GM12878 (cell line): ENCODE measurements at regions of chr7 and their contacts with region 1.

Region 1: DNA sequence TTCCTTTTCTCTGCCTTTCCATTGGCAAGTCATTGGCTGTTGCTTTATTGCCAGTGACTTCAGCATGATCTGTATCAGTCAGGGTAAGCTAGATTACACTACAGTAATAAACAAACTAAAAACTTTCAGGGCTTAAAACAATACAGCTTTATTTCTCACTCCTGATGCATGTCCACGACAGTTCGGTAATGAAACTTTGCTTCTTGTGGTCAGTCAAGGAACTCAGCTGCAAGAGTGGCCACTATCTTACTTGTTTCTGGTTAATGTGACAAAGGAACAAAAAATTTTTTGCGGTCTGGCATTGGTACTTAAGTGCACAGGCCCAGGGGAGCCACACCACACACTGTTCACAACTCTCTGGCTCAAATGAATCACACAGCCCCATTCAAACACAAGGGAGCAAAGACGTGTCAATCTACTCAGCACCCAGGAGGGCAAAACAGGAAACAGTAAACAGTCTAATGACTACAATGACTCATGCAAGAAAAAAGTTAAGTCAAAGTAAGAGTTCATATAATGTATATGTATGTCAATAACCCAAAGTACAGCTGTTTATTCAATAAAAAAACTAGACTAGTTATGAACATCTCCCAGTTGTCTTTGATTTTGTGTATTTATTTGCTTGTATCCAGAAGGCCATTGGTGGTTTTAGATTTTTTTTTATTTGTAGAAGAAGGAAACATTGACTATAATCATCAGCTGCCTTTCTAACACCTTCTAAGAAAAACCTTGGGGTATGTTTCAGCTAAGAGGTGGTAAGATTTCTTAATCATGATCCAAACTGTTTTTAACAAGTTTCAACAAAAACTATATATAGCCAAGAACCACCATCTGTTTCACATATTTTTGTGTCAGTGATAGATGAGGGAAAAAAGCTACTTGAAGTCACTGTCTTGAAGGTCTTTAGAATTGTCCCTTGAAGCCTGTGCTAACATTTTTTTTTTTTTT is 134.4 kb upstream of the FAM3C start:
- DNase-seq: peak; percentile 99
- ATAC-seq: peak; percentile 98
- H3K4me3 ChIP-seq: no peak overlapping the region
- H3K27ac ChIP-seq: peak overlapping the region; percentile 80
- H3K4me1 ChIP-seq: peaks cover 17% of the 10 kb centered on the region; the same call in 1 of the 2 replicates
- H3K27me3 ChIP-seq: no peaks in the 10 kb centered on the region
- CTCF ChIP-seq: no peak
- EP300 ChIP-seq: peak; percentile 99 to 100
- POLR2A ChIP-seq: no peak
- RAD21 ChIP-seq: no peak

Region 2: DNA sequence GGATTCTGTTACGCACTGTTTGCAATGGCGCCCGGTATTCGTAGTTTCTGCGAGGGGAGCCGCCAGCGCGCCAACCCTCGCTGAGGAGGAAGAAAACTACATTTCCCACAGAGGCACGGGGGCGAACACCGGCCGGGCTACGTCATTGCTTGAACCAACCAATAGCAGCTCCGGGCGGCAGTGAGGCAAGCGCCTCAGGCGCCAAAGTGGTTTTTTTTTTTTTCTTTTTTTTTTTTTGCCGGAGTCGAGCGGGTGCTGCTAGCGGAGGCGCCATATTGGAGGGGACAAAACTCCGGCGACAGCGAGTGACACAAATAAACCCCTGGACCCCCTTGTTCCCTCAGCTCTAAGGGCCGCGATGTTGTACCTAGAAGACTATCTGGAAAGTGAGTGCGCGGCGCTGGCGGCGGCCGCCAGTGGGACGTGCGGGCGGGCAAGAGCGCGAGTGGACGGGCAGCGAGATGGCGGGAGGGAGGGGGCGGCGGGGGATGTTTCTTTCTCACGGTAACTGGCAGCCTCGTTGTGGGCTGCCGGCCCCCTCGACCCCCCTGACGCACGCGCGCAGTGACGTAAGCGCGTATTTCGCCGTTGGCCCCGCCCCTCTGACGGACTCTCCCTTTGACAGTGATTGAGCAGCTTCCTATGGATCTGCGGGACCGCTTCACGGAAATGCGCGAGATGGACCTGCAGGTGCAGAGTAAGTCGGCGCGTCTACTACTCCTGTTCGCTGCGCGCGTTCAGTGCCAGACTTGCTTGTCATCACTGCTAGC is 579.8 kb before region 1 on chr7 and contains the start of gene ING3:
- CTCF ChIA-PET with region 1: no interaction called
- POLR2A ChIA-PET with region 1: no interaction called
- RAD21 ChIA-PET with region 1: no interaction called
- SMC1A ChIA-PET with region 1: no interaction called
- in situ Hi-C with region 1: loop called (anchors 25 kb)
- intact Hi-C with region 1: loop called (anchors 10 kb)
- DNase-seq: peak; percentile 92
- ATAC-seq: peak; percentile 93
- H3K4me3 ChIP-seq: peak within 1 kb of the TSS; percentile 90
- H3K27ac ChIP-seq: peak within 1 kb of the TSS; percentile 97
- H3K4me1 ChIP-seq: 0 out of 2 replicates have a peak, but pooled peaks cover 5% of the 10 kb centered on the region
- H3K27me3 ChIP-seq: no peaks in the 10 kb centered on the region
- CTCF ChIP-seq: no peak
- EP300 ChIP-seq: 0 out of 4 replicates have a peak, but pooled peaks of 1 of the 2 experiments have one; percentile 15
- POLR2A ChIP-seq: peak; percentile 89
- RAD21 ChIP-seq: no peak
- polyA plus RNA-seq, gene ING3: 44.3 to 60.8 TPM

Region 3: DNA sequence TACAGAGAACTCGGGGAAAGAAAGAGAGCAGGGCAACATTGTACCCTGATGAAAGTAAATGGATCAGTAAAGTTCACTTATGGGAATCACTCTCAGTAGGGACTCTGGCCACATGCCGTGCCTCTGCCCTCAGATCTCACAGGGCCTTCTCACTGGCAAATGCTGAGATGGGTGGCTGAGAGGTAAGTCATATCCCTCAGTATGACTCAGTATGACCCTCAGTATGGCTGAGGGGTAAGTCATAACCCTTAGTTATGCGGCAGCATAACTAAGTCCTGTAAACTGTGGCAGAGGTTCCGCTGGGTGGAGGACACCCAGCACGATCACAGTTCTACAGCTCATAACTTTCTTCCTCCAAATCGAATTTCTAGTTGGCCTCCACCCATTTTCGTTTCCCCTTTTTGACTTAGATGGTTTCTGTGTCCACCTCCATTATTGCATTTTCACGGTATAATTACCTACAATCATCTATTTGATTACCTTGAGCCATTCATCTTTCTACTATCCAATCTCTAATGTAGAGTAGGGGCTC is 228.2 kb before region 1 on chr7:
- CTCF ChIA-PET with region 1: no interaction called
- POLR2A ChIA-PET with region 1: no interaction called
- RAD21 ChIA-PET with region 1: no interaction called
- SMC1A ChIA-PET with region 1: no interaction called
- in situ Hi-C with region 1: no loop called
- intact Hi-C with region 1: loop called (anchors 10 kb)
- DNase-seq: no peak
- ATAC-seq: peak; percentile 97
- H3K4me3 ChIP-seq: no peak overlapping the region
- H3K27ac ChIP-seq: no peak overlapping the region
- H3K4me1 ChIP-seq: peaks cover 29% of the 10 kb centered on the region
- H3K27me3 ChIP-seq: no peaks in the 10 kb centered on the region
- CTCF ChIP-seq: no peak
- EP300 ChIP-seq: peak in 1 of 2 experiments; percentile 67; a peak in 1 of 4 replicates
- POLR2A ChIP-seq: no peak
- RAD21 ChIP-seq: no peak

Region 4: GRCh38 chr7:121372376-121373010 is 158.0 kb before region 1 on chr7:
- CTCF ChIA-PET with region 1: interaction called, 29 read pairs
- POLR2A ChIA-PET with region 1: interaction called, 12 read pairs
- RAD21 ChIA-PET with region 1: interaction called, 61 read pairs
- SMC1A ChIA-PET with region 1: interaction called, 24 read pairs
- in situ Hi-C with region 1: no loop called
- intact Hi-C with region 1: loop called (anchors 1 kb)
- DNase-seq: peak; percentile 73
- ATAC-seq: peak; percentile 88
- H3K4me3 ChIP-seq: no peak overlapping the region
- H3K27ac ChIP-seq: peak overlapping the region; percentile 58
- H3K4me1 ChIP-seq: peaks cover 32% of the 10 kb centered on the region
- H3K27me3 ChIP-seq: no peaks in the 10 kb centered on the region
- CTCF ChIP-seq: no peak
- EP300 ChIP-seq: peak; percentile 37 to 91; a peak in 3 of 4 replicates
- POLR2A ChIP-seq: no peak
- RAD21 ChIP-seq: 0 out of 2 replicates have a peak, but pooled peaks have one; percentile 6

Region 5: DNA sequence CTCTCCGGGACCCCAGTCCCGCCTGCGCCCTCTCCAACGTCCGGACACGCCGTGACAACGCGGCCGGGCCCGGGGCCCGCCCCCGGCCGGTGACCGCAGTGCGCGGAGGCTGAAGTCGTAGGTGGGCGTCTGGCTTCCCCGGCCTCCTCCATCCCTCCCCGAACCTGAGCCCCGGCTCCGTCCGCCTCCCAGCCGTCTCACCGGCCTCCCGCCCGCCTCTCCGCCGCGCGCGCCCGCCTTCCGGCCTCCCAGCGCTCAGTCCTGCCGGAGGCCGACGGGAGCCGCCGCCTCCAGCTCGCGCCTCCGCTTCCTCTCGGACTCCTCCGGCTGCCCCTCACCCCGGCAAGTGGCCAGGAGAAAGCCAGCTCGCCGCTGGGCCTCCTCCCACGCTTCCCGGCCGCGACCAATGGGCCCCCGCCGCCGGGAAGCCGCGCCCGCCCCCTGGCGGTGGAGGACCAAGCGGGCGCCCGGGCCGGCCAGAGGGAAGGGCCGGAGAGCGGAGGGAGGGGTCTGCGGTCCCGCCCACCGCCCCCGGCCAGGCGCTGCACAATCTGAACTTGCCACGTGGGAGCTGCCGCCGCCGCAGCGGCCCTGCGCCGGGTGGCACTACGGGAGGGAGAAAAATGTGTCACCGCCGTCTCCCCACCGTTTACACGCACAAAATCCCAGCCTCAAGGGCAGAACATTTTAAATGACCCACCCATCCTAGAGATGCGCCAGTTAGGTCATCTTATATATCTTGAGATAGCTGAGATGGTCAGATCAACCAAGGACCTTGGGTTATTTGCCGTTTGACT is 134.3 kb before region 1 on chr7 and contains the start of gene FAM3C:
- CTCF ChIA-PET with region 1: interaction called, 34 read pairs
- POLR2A ChIA-PET with region 1: interaction called, 43 read pairs
- RAD21 ChIA-PET with region 1: interaction called, 133 read pairs
- SMC1A ChIA-PET with region 1: interaction called, 66 read pairs
- in situ Hi-C with region 1: no loop called
- intact Hi-C with region 1: loop called (anchors 1 kb)
- DNase-seq: peak; percentile 53
- ATAC-seq: peak; percentile 86
- H3K4me3 ChIP-seq: peak within 1 kb of the TSS; percentile 69
- H3K27ac ChIP-seq: peak within 1 kb of the TSS; percentile 66
- H3K4me1 ChIP-seq: peaks cover 8% of the 10 kb centered on the region
- H3K27me3 ChIP-seq: no peaks in the 10 kb centered on the region
- CTCF ChIP-seq: peak; percentile 66 to 94 (median 80); a peak in 5 of 6 replicates
- EP300 ChIP-seq: no peak; a peak in 1 of 4 replicates
- POLR2A ChIP-seq: peak; percentile 94
- RAD21 ChIP-seq: peak; percentile 77
- polyA plus RNA-seq, gene FAM3C: 11.0 to 13.6 TPM

Region 6: GRCh38 chr7:121500360-121501058 is 30.0 kb before region 1 on chr7:
- CTCF ChIA-PET with region 1: interaction called, 5 read pairs
- POLR2A ChIA-PET with region 1: interaction called, 8 read pairs
- RAD21 ChIA-PET with region 1: interaction called, 9 read pairs
- SMC1A ChIA-PET with region 1: interaction called, 5 read pairs
- in situ Hi-C with region 1: no loop called
- intact Hi-C with region 1: loop called (anchors 2 kb)
- DNase-seq: no peak
- ATAC-seq: peak; percentile 79
- H3K4me3 ChIP-seq: no peak overlapping the region
- H3K27ac ChIP-seq: no peak overlapping the region
- H3K4me1 ChIP-seq: no peaks in the 10 kb centered on the region
- H3K27me3 ChIP-seq: no peaks in the 10 kb centered on the region
- CTCF ChIP-seq: no peak
- EP300 ChIP-seq: no peak
- POLR2A ChIP-seq: no peak
- RAD21 ChIP-seq: no peak

Region 7: DNA sequence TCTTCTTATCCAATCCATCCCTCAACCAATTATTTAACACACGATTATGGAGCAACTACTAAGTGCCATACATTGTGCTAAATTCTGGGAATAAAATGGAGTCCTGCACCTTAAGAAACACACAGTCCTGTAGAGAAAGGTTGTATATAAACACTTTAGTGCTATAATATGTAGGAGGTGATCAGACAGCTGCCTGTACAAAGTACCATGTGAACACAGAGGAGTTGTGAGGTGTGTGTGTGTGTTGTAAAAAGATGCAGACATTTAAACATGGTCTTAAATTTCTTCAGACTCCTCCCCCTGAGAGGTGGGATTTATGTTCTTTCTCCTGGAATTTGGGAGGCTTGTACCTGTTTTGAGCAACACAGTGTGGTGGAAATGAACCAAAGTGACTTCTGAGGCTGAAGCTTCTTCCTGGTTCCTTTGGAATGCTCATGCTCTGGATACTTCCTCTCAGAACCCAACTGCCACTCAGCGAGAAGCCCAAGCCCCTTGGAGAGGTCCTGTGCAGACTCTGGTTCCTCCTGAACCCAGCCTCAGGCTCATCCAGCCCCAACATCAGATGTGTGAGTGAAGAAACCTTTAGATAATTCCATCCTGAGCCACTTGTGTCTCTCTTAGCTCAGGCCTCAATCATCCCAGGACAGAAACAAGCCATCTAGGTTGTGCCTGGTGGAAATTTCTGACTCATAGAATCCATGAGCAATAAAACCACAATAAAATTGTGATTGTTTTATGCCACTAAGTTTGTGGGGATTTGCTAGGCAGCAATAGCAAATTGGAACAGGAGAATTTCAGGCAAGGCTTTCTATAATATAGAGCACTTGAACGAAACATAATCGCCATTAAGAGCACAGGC is 26.8 kb after region 1 on chr7:
- CTCF ChIA-PET with region 1: no interaction called
- POLR2A ChIA-PET with region 1: no interaction called
- RAD21 ChIA-PET with region 1: no interaction called
- SMC1A ChIA-PET with region 1: no interaction called
- in situ Hi-C with region 1: no loop called
- intact Hi-C with region 1: no loop called
- DNase-seq: no peak
- ATAC-seq: no peak
- H3K4me3 ChIP-seq: no peak overlapping the region
- H3K27ac ChIP-seq: no peak overlapping the region
- H3K4me1 ChIP-seq: no peaks in the 10 kb centered on the region
- H3K27me3 ChIP-seq: peaks cover 0 to 2% of the 10 kb centered on the region in 2 experiments; a peak in 1 of 4 replicates
- CTCF ChIP-seq: no peak
- EP300 ChIP-seq: no peak
- POLR2A ChIP-seq: no peak
- RAD21 ChIP-seq: no peak